WTC11 (cell line): ENCODE measurements at regions of chr5 and their contacts with region 1.

Region 1: GRCh38 chr5:126776497-126777256 is at the start of gene LMNB1:
- DNase-seq: peak; percentile 97
- ATAC-seq: peak; percentile 87
- H3K4me3 Mint-ChIP-seq: peak within 1 kb of the TSS; percentile 93
- H3K27ac Mint-ChIP-seq: peak within 1 kb of the TSS; percentile 99
- H3K4me1 Mint-ChIP-seq: peaks cover 29% of the 10 kb centered on the region
- H3K27me3 Mint-ChIP-seq: no peaks in the 10 kb centered on the region
- CTCF ChIP-seq: no peak
- total RNA-seq, gene LMNB1: 220 to 233 TPM (median 223 TPM) in 3 replicates

Region 2: GRCh38 chr5:126600631-126601511 is 175.8 kb before region 1 on chr5 and contains the start of gene PHAX:
- CTCF ChIA-PET with region 1: interaction called, 4 read pairs
- POLR2A ChIA-PET with region 1: interaction called, 17 read pairs
- DNase-seq: peak; percentile 84
- ATAC-seq: peak; percentile 90
- H3K4me3 Mint-ChIP-seq: peak within 1 kb of the TSS; percentile 98
- H3K27ac Mint-ChIP-seq: peak within 1 kb of the TSS; percentile 97
- H3K4me1 Mint-ChIP-seq: peaks cover 43% of the 10 kb centered on the region
- H3K27me3 Mint-ChIP-seq: no peaks in the 10 kb centered on the region
- CTCF ChIP-seq: peak; percentile 24; the same call in 1 of the 2 replicates
- total RNA-seq, gene PHAX: 45.6 to 58.2 TPM (median 46.8 TPM) in 3 replicates

Region 3: GRCh38 chr5:126676195-126676624 is 100.5 kb before region 1 on chr5:
- CTCF ChIA-PET with region 1: interaction called, 41 read pairs
- POLR2A ChIA-PET with region 1: interaction called, 62 read pairs
- DNase-seq: peak; percentile 60
- ATAC-seq: peak; percentile 23
- H3K4me3 Mint-ChIP-seq: no peak overlapping the region
- H3K27ac Mint-ChIP-seq: peak overlapping the region; percentile 60
- H3K4me1 Mint-ChIP-seq: peaks cover 64% of the 10 kb centered on the region
- H3K27me3 Mint-ChIP-seq: no peaks in the 10 kb centered on the region; the same call in 1 of the 2 replicates
- CTCF ChIP-seq: peak; percentile 55

Region 4: GRCh38 chr5:126754609-126755008 is 22.1 kb before region 1 on chr5:
- CTCF ChIA-PET with region 1: interaction called, 10 read pairs
- POLR2A ChIA-PET with region 1: interaction called, 3 read pairs
- DNase-seq: no peak
- ATAC-seq: no peak
- H3K4me3 Mint-ChIP-seq: no peak overlapping the region
- H3K27ac Mint-ChIP-seq: no peak overlapping the region
- H3K4me1 Mint-ChIP-seq: peaks cover 28% of the 10 kb centered on the region
- H3K27me3 Mint-ChIP-seq: no peaks in the 10 kb centered on the region
- CTCF ChIP-seq: no peak

Region 5: GRCh38 chr5:126961702-126962101 is 185.0 kb after region 1 on chr5:
- CTCF ChIA-PET with region 1: no interaction called
- POLR2A ChIA-PET with region 1: no interaction called
- DNase-seq: no peak
- ATAC-seq: no peak
- H3K4me3 Mint-ChIP-seq: no peak overlapping the region
- H3K27ac Mint-ChIP-seq: peak overlapping the region; percentile 54; the same call in 1 of the 2 replicates
- H3K4me1 Mint-ChIP-seq: peaks cover 24% of the 10 kb centered on the region
- H3K27me3 Mint-ChIP-seq: no peaks in the 10 kb centered on the region
- CTCF ChIP-seq: no peak